ENCODE measurements at regions of chr4 and their contacts with region 1.

Region 1: GRCh38 chr4:15805583-15806517 is 27.7 kb downstream of the CD38 start:
- DNase-seq: no peak
- ATAC-seq: peak; percentile 81
- H3K4me3 Mint-ChIP-seq: no peak overlapping the region
- H3K27ac Mint-ChIP-seq: no peak overlapping the region
- H3K4me1 Mint-ChIP-seq: peaks cover 50% of the 10 kb centered on the region
- H3K27me3 Mint-ChIP-seq: no peaks in the 10 kb centered on the region
- CTCF ChIP-seq: peak; percentile 20

Region 2: GRCh38 chr4:15756361-15756861 is 49.4 kb before region 1 on chr4:
- CTCF ChIA-PET with region 1: interaction called, 15 read pairs
- POLR2A ChIA-PET with region 1: no interaction called
- intact Hi-C with region 1: no loop called
- DNase-seq: no peak
- ATAC-seq: peak; percentile 84
- H3K4me3 Mint-ChIP-seq: peak overlapping the region; percentile 44
- H3K27ac Mint-ChIP-seq: no peak overlapping the region
- H3K4me1 Mint-ChIP-seq: peaks cover 34% of the 10 kb centered on the region
- H3K27me3 Mint-ChIP-seq: no peaks in the 10 kb centered on the region
- CTCF ChIP-seq: peak; percentile 8

Region 3: DNA sequence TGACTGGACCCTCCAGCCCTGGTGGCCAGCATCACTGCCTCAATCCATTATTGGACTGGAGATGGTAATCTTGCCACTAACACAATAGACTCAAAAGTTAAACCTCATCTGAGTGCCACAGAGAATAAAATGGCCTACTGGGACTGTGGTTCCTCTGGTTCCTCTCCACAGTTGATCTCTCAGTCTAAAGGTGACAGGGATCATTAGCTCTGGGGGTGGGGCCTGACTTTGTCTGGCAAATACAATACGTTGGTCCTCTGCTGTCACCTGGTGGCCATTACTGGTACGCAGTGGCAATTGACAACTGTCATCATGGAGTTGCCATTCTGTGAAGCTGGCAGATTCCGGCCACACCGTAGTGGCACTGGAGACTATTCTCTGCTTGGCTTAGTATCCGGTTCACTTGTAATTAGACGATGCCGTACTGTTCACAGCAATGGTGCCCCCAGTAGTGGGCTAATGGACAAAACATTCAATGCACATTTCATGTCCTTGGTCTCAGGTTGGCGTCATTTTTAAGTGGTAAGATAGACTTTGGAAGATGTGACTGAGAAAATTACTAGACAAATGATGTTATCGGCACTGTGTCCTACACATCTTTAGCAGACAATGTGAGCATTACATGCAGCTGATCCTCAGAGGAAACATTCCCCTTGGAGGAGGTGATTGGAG is 150.5 kb after region 1 on chr4:
- CTCF ChIA-PET with region 1: interaction called, 98 read pairs
- POLR2A ChIA-PET with region 1: interaction called, 4 read pairs
- intact Hi-C with region 1: loop called (anchors 1 kb)
- DNase-seq: peak; percentile 56
- ATAC-seq: peak; percentile 100
- H3K4me3 Mint-ChIP-seq: no peak overlapping the region
- H3K27ac Mint-ChIP-seq: no peak overlapping the region
- H3K4me1 Mint-ChIP-seq: peaks cover 5% of the 10 kb centered on the region
- H3K27me3 Mint-ChIP-seq: no peaks in the 10 kb centered on the region
- CTCF ChIP-seq: no peak

Region 4: DNA sequence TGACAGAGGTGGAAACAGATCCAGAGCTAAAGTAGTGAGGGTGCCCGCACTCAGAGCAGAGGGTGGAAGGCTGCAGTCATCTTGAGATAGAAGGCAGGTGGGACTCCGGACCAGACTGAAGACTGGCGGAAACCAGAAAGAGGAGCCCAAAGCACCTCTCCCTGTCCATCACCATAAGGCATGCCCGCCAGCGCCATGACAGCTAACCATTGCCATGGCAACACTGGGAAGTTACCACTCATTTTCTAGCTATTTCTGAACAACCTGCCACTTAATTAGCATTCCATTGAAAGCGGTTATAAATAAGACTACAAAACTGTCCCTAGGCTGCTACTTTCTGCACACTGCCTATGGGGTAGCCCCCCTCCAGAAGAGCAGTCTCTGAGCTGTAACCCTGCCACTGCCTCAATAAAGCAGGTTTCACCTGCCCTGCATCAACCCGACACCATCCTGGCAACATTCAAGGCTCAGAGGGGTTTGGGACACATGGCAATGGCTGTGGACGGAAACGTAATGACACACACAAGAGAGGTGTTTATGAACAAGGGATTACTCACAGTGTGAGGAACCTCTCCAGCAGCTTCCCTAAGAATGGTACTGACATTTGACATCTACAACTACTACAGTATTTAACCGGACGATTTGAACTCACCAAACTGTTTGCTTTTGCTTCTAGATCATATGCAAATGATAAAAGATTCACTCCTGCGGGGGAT is 184.9 kb after region 1 on chr4:
- CTCF ChIA-PET with region 1: no interaction called
- POLR2A ChIA-PET with region 1: no interaction called
- intact Hi-C with region 1: no loop called
- DNase-seq: no peak
- ATAC-seq: no peak
- H3K4me3 Mint-ChIP-seq: no peak overlapping the region
- H3K27ac Mint-ChIP-seq: no peak overlapping the region
- H3K4me1 Mint-ChIP-seq: no peaks in the 10 kb centered on the region
- H3K27me3 Mint-ChIP-seq: peaks cover 8% of the 10 kb centered on the region
- CTCF ChIP-seq: no peak

Region 5: DNA sequence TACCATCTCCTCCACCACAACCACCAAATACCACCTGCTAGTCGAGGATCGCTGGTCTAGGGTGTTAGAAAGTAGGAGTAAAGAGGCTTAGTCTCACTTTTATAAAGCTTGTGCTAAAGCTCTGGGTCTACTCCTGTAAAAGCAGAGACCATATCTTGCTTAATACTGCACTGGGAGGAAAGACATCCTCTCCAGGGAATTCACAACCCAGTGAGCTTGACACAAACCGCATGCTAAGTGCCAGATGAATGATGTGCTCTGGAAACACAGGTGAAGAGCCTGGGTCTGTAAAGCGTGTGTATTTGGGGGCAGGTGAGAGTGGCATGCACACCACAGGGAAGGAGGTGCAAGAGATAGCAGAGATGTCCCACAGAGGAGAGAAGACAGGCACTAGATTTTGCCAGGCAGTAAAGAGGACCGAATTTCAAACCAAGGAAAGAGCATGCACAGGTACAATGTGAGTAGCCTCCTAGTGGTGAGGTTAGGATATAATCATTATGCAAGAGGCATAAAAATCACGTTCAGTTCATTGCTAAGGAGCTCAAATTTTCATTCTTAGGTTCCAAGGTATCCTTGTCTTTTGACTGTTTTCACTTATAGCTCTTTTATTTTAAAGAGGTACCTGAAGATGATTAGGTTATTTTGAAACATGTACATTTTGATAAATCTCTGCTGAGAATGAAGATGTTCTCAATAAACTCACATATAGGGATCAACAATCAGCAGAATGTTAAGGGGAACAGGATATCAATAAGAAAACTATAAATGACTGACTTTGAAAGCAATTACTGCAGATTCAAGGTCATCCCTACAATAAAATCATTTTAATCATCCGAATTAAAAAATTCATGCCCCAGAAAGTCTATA is 399.7 kb after region 1 on chr4:
- CTCF ChIA-PET with region 1: no interaction called
- POLR2A ChIA-PET with region 1: no interaction called
- intact Hi-C with region 1: loop called (anchors 5 kb)
- DNase-seq: peak; percentile 28
- ATAC-seq: peak; percentile 86
- H3K4me3 Mint-ChIP-seq: no peak overlapping the region
- H3K27ac Mint-ChIP-seq: peak overlapping the region; percentile 7
- H3K4me1 Mint-ChIP-seq: peaks cover 33% of the 10 kb centered on the region
- H3K27me3 Mint-ChIP-seq: no peaks in the 10 kb centered on the region
- CTCF ChIP-seq: no peak

Measured in activated B cell treated with CpG ODN at 0.5 μM for 24 hours (primary cell).